ENCODE measurements at regions of chr1 and their contacts with region 1.

Region 1: DNA sequence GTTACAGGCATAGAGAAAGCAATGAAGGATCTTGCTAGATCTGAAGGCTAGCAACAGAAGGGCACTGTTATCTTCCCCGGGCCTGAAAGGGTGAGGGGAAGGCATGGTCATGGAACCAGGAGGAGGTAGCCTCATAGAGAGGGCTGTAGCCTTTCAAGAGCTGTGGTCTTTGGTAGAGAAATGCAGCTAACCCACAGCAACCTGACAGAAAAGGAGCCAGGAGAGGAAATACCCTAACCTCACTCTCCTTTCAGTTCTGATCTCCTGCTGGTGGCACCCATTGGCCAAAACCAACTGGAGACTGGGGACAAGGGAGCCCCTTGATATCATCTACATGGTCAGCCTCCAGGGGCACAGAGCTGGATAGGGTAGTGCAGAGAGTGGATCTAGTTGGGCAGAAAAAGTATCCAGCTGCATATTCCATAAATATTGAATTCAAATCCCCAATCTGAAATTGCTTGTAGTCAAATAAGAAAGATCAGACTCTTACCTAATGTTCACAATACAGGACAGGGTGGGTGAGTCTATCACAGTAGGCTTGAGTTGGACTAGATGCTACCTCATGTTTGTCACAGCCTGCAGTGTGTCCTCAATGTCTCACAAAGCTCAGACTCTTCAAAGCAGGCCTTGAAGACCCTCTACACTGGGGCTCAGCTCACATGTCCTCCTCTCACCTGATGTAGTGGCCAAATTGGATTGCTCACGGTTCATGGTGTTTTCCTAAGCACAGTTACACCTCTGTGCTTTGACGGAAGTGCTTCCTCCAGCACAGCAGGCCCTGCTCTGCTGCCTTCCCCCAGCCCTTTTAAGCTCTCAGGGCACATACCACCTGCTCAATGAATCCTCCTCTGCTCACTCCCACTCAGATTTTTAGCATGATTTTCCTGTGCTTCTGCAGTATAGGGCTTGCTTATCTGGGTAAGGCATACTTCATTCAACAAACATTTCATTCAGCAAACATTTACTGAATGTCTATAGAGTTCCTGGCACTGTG is 74.1 kb upstream of the JUN start:
- DNase-seq: no peak
- H3K4me3 ChIP-seq: no peak overlapping the region
- H3K27ac ChIP-seq: peak overlapping the region in 12 of 59 donors; percentile 1 to 67 (median 12)
- H3K27me3 ChIP-seq: no peaks in the 10 kb centered on the region
- CTCF ChIP-seq: no peak

Region 2: GRCh38 chr1:58816072-58816746 is 41.8 kb before region 1 on chr1:
- intact Hi-C with region 1: loop called in 1 of 2 experiments (anchors 5 kb)
- DNase-seq: peak; percentile 73 to 90 (median 84)
- H3K4me3 ChIP-seq: peak overlapping the region; percentile 33 to 82 (median 68)
- H3K27ac ChIP-seq: peak overlapping the region; percentile 10 to 96 (median 85)
- H3K27me3 ChIP-seq: no peaks in the 10 kb centered on the region
- CTCF ChIP-seq: peak in 41 of 56 donors; percentile 7 to 61 (median 36)

Region 3: DNA sequence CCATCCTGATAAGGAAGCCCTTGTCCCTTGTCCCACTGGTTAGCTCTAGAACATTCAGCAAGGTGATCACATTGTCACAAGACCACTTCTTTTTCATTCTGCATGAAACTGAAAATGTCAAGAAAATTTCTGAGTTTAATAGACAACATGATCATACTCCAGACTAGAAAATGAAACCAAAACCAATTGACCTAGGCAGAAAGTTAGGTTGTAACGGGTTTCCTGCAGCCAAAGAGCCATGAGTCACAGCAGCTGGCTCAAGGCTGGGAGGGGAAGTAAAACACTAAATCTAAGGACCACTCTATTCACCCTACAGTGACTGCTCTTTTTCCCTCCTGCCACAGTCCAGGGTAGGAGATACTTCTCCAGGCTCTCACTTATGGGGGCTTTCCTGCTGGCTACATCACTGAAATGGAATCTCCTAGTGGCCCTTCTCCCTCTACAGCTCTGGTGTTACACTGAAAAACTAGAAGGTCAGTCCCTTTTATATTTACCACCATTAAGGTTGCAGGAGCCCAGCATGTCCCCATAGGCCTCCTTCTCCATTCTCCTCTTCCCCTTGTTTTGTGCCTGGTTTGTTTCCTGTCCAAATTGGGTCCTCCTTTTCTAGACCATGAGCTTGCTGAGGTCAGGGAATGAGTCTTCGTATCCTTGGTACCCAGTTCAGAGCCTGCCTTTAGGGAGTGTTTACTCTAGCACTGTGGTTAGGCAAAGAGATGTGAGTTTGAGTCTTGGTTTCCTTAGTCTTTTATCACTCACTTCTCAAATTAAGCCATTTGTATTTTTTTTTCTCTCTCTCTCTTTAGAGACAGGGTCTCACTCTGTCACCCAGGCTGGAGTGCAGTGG is 162.4 kb after region 1 on chr1:
- intact Hi-C with region 1: no loop called
- DNase-seq: no peak
- H3K4me3 ChIP-seq: peak overlapping the region in 22 of 59 donors; percentile 0 to 35 (median 18)
- H3K27ac ChIP-seq: peak overlapping the region in 15 of 59 donors; percentile 6 to 75 (median 44)
- H3K27me3 ChIP-seq: no peaks in the 10 kb centered on the region
- CTCF ChIP-seq: no peak